Left ventricle myocardium superior (tissue), 1 donor: ENCODE measurements at regions of chr1 and their contacts with region 1.

Region 1: DNA sequence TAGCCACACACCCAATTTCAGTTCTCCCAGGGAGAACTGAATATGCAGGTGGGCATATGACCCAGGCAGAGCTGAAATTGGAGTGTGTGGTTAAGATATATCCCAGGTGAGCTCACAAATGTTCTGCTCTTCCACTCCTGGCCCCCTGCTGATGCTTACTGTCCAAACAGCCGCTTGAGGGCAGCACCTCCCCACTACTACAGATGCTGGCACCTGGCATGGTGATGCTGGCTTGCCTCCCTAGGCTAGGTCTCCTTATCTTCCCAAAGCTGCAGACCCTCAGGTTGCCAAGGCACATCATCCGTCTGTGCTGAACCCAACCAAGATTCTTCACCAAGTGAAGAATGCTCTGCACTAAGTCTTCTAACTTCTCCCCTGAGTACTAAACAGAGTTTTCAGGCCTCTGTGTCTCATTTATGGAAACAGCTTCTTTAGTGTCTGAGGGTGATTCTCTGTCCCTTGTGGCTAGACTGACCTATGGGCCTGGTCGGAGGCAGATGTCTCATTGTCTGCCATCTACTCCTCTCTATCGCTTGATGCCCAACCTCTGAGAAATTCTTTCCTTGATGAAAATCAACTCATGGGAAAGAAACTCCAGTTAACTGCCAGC is 27.2 kb downstream of the XCL1 start:
- DNase-seq: peak; percentile 85
- ATAC-seq: peak; percentile 93

Region 2: GRCh38 chr1:168466092-168466713 is 137.4 kb before region 1 on chr1:
- intact Hi-C with region 1: no loop called
- DNase-seq: no peak
- ATAC-seq: peak; percentile 29

Region 3: DNA sequence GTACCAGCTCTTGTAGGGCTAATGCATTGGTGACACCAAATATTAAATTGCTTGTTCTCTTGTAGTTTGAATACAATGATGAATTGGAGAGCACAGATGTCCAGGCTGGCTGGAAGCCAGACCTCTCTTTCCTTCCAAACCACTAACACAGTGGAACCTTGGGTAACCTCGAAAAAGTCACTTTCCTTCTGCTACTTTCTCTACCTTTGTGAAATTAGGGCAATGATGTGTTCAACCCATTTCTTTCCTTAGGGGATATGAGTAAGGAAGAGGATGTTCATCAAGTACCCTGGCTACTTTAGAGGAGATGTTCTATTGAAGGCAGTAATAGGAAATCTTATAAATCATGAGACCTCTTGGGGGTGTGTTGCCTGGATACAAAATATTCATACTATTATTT is 115.5 kb before region 1 on chr1:
- intact Hi-C with region 1: no loop called
- DNase-seq: peak; percentile 68
- ATAC-seq: peak; percentile 76

Region 4: GRCh38 chr1:169106095-169106920 is 502.7 kb after region 1 on chr1 and contains the start of gene ATP1B1:
- intact Hi-C with region 1: loop called (anchors 10 kb)
- DNase-seq: peak; percentile 94
- ATAC-seq: peak; percentile 86
- total RNA-seq, gene ATP1B1: 298 TPM

Region 5: GRCh38 chr1:169348383-169349036 is 744.9 kb after region 1 on chr1:
- intact Hi-C with region 1: loop called (anchors 2 kb)
- DNase-seq: no peak
- ATAC-seq: no peak